Dorsolateral prefrontal cortex (tissue), 120 donors: ENCODE measurements at regions of chr4 and their contacts with region 1.

Region 1: DNA sequence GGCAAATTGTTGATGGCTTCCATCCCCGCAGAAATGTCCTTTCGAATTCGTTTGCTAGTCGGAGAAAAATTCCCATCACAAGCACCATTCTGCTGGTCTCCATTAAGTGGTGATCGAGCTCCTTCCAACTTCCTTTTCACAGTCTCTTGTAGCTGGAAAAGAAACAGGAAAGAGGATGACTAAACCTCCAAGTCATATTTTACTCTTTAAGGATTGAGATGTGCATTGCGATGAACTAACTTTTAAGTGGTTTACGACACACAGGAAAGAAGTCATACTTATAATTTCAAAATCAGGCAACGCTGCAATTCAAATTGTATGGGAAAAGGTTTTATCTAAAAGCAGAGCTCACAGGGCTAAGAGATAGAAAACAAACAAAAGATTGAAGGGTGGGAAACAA is 225.2 kb downstream of the MGST2 start:
- DNase-seq: no peak
- H3K4me3 ChIP-seq: no peak overlapping the region
- H3K27ac ChIP-seq: no peak overlapping the region
- H3K27me3 ChIP-seq: no peaks in the 10 kb centered on the region
- CTCF ChIP-seq: no peak

Region 2: GRCh38 chr4:139740531-139741041 is 150.2 kb before region 1 on chr4:
- intact Hi-C with region 1: loop called in 1 of 2 experiments (anchors 10 kb)
- DNase-seq: peak in 9 of 10 donors; percentile 42 to 82 (median 72)
- H3K4me3 ChIP-seq: peak overlapping the region in 20 of 59 donors; percentile 2 to 28 (median 14)
- H3K27ac ChIP-seq: peak overlapping the region; percentile 42 to 96 (median 86)
- H3K27me3 ChIP-seq: no peaks in the 10 kb centered on the region
- CTCF ChIP-seq: peak in 41 of 56 donors; percentile 5 to 56 (median 32)